GM23248 (cell line): ENCODE measurements at regions of chr16 and their contacts with region 1.

Region 1: GRCh38 chr16:55842369-55843104 is 9.6 kb upstream of the CES1 start:
- DNase-seq: peak; percentile 63
- H3K4me3 ChIP-seq: no peak overlapping the region
- H3K27ac ChIP-seq: no peak overlapping the region
- H3K4me1 ChIP-seq: no peaks in the 10 kb centered on the region
- H3K27me3 ChIP-seq: peaks cover 8% of the 10 kb centered on the region; the same call in 1 of the 2 replicates

Region 2: GRCh38 chr16:55444754-55445485 is 397.6 kb before region 1 on chr16:
- in situ Hi-C with region 1: loop called (anchors 10 kb)
- DNase-seq: no peak
- H3K4me3 ChIP-seq: no peak overlapping the region
- H3K27ac ChIP-seq: no peak overlapping the region
- H3K4me1 ChIP-seq: no peaks in the 10 kb centered on the region
- H3K27me3 ChIP-seq: peaks cover 16% of the 10 kb centered on the region

Region 3: DNA sequence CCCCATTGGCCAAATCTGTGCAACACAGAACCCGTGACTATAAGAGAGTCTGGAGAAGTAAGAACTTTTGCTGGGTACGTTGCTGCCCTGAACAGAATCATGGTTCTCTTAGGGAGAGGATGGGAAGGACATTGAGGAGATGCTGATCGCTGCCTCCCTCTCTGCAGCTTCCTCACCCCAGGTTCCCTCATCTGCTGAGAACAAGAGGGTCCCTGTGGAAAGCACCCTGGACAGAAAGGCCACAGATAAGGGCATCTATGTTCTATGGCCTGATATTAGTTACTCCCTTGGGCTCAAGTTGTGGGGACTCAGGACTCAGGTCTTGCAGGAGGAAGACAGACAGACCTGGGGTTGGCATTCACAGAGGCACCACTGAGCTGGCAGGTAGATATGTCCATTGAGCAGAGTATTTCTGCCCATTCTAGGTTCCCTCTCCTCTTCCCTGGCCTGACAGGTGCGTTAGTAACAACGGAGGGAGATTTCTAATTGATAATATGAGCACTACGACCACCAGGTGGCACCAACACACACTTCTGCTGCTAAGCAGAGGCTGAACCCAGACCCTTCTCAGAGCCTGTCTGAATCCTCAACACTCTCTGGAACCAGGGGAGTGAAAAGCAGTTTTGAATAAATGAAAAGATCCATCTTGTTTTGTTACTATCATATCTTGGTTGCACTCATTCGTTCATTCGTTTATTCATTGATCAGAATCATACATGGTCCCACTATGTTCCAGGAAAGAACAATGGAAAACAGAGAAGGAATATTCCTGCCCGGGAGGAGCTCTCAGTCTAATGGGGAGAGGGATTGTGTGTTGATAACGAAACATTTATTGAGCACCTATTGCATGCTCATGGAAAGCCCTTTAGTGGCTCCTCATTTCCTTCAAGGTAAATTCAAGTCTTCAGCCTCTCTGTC is 130.3 kb before region 1 on chr16:
- in situ Hi-C with region 1: loop called (anchors 5 kb)
- DNase-seq: peak; percentile 73
- H3K4me3 ChIP-seq: no peak overlapping the region
- H3K27ac ChIP-seq: no peak overlapping the region
- H3K4me1 ChIP-seq: no peaks in the 10 kb centered on the region
- H3K27me3 ChIP-seq: peaks cover 11% of the 10 kb centered on the region

Region 4: GRCh38 chr16:55746081-55746480 is 96.5 kb before region 1 on chr16:
- in situ Hi-C with region 1: no loop called
- DNase-seq: no peak
- H3K4me3 ChIP-seq: no peak overlapping the region
- H3K27ac ChIP-seq: no peak overlapping the region
- H3K4me1 ChIP-seq: no peaks in the 10 kb centered on the region
- H3K27me3 ChIP-seq: no peaks in the 10 kb centered on the region